HEK293T (cell line): ENCODE measurements at regions of chr1 and their contacts with region 1.

Region 1: GRCh38 chr1:35769188-35769758 is 505 bp downstream of the CLSPN start:
- DNase-seq: peak; percentile 87

Region 2: DNA sequence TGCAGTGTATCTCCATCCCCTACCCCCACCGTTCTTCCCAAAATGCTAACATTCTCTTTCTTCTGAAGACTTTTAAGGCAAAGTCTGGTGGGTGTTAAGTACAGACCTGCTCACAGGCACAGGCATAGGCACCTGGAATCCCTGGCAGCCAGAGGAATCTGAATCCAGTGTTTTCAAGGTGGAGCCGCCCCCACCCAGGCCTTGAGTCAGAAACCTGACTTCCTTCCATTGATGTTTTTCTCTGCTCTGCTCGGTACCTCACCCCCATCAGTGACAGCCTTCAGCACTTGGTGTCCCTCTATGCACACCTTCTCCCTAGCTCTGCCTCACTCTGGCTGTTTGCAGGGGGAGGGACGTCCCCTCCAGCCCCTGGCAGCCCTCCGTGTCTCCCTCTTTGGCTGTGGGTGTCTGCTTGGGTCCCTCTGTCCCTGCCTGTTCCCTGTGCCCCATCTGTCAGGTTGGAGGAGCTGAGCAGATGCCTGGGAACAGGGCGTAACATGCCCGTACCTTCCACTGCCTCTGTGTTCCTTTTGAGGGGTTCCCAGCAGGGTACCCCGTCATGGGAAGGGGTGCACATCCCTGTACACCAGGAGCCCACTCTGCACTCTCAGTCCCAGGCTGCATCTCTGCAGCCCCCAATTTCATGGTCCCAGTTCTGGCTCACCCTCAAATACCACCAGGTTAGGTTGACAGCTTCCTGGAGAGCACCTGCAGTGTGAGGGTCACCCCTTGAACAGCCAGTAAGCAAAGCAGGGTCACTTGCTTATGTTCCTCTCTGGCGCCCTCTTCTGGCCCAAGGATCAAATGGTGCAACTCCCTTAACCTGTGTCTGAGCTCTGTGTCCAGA is 205.0 kb before region 1 on chr1:
- CTCF ChIA-PET with region 1: interaction called, 8 read pairs
- POLR2A ChIA-PET with region 1: interaction called, 14 read pairs
- DNase-seq: peak; percentile 73

Region 3: DNA sequence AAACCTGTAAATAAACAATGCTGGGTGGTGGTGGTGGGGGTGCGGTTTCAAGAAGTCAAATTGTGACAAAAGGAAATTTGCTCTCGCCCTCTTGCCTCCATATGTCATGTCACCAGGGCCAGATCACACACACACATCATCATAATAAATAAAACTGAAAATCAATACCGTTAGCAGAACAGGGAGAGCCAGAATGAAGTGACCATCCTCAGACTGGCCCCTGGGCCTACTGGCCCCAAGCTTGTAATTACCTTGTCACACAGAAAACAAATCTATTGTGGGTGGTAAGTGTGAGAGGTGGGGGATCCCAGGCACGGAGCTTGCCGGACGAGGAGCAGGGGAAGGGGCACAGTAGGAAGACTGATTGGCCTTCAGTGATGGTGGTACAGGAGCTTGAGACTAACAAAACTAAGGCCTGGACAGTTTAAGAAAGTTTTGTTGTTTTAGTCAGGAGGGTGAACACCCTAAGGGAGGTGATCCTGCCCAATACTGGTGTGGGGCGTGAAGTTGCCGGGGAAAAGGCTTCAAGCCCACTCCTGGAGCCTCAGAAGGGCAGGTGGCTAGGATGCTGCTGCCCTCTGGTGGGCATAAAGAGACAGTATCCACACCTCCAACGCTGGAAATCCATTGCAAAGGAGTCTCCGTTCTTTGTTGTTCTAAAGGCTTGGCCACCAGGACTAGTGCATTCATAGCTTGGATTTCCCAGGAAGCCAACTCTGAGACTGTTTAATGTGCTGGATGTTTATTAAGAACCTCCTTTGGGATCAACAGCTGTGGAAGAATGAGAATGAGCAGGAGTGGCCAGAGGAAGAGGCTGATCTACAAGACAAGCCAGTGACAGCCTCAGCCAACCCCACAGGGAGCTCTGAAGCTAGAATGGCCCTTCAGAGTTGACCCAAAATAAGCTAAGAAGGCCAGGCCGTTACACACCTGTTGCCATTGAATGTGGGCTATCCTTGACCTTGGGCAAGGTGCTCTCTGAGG is 42.5 kb before region 1 on chr1:
- CTCF ChIA-PET with region 1: interaction called, 8 read pairs
- POLR2A ChIA-PET with region 1: interaction called, 30 read pairs
- DNase-seq: peak; percentile 81

Region 4: GRCh38 chr1:35747938-35748702 is 21.2 kb before region 1 on chr1:
- CTCF ChIA-PET with region 1: no interaction called
- POLR2A ChIA-PET with region 1: interaction called, 22 read pairs
- DNase-seq: no peak

Region 5: GRCh38 chr1:35807614-35808449 is 38.6 kb after region 1 on chr1 and contains the start of gene AGO4:
- CTCF ChIA-PET with region 1: no interaction called
- POLR2A ChIA-PET with region 1: interaction called, 14 read pairs
- DNase-seq: peak; percentile 69